ENCODE measurements at regions of chrX and their contacts with region 1.

Region 1: GRCh38 chrX:150704030-150704613 is 10.9 kb downstream of the MTMR1 start:
- DNase-seq: no peak
- H3K4me3 ChIP-seq: no peak overlapping the region
- H3K4me3 Mint-ChIP-seq: no peak overlapping the region
- H3K27ac ChIP-seq: no peak overlapping the region
- H3K27ac Mint-ChIP-seq: peak overlapping the region in 4 of 8 donors; percentile 6 to 88 (median 37)
- H3K4me1 ChIP-seq: no peaks in the 10 kb centered on the region
- H3K4me1 Mint-ChIP-seq: peaks cover 19 to 65% (median 43%) of the 10 kb centered on the region in 3 donors
- H3K27me3 ChIP-seq: no peaks in the 10 kb centered on the region
- H3K27me3 Mint-ChIP-seq: peaks cover 0 to 6% of the 10 kb centered on the region in 2 donors

Region 2: GRCh38 chrX:150693775-150694574 is 10.1 kb before region 1 on chrX:
- CTCF ChIA-PET with region 1: no interaction called
- POLR2A ChIA-PET with region 1: interaction called, 12 read pairs
- DNase-seq: peak; percentile 53 to 84 (median 68)
- H3K4me3 ChIP-seq: peak overlapping the region; percentile 55
- H3K4me3 Mint-ChIP-seq: peak overlapping the region; percentile 93 to 100 (median 95)
- H3K27ac ChIP-seq: peak overlapping the region; percentile 73
- H3K27ac Mint-ChIP-seq: peak overlapping the region; percentile 97 to 100 (median 98)
- H3K4me1 ChIP-seq: peaks cover 64% of the 10 kb centered on the region
- H3K4me1 Mint-ChIP-seq: peaks cover 55 to 75% (median 58%) of the 10 kb centered on the region in 3 donors
- H3K27me3 ChIP-seq: no peaks in the 10 kb centered on the region
- H3K27me3 Mint-ChIP-seq: peaks cover 0 to 4% of the 10 kb centered on the region in 2 donors

Region 3: DNA sequence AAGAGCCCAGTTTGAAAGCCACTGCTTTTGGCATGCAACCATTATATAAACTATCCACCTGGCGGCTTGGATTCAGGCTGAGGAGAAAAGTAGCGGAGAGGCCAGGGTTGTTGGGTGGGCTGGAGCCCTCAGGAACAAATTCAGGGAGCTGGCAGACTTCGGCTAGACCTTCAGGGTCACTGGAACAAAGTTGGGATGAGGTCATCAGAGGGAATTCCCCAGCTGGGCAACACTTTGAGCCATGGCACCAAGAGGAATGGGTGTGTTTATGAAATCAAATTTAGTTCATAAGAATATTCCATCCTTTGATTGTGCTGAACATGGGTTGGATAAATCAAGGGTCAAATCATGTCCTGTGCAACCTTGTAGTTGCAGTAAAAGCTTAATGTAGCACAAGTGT is 11.1 kb after region 1 on chrX:
- CTCF ChIA-PET with region 1: no interaction called
- POLR2A ChIA-PET with region 1: no interaction called
- DNase-seq: no peak
- H3K4me3 ChIP-seq: no peak overlapping the region
- H3K4me3 Mint-ChIP-seq: no peak overlapping the region
- H3K27ac ChIP-seq: no peak overlapping the region
- H3K27ac Mint-ChIP-seq: peak overlapping the region in 4 of 8 donors; percentile 7 to 37 (median 30)
- H3K4me1 ChIP-seq: no peaks in the 10 kb centered on the region
- H3K4me1 Mint-ChIP-seq: peaks cover 13 to 53% (median 44%) of the 10 kb centered on the region in 3 donors
- H3K27me3 ChIP-seq: no peaks in the 10 kb centered on the region
- H3K27me3 Mint-ChIP-seq: no peaks in the 10 kb centered on the region

Measured in CD8-positive, alpha-beta memory T cell (primary cell).